HCT116 (cell line): ENCODE measurements at regions of chr12 and their contacts with region 1.

Region 1: DNA sequence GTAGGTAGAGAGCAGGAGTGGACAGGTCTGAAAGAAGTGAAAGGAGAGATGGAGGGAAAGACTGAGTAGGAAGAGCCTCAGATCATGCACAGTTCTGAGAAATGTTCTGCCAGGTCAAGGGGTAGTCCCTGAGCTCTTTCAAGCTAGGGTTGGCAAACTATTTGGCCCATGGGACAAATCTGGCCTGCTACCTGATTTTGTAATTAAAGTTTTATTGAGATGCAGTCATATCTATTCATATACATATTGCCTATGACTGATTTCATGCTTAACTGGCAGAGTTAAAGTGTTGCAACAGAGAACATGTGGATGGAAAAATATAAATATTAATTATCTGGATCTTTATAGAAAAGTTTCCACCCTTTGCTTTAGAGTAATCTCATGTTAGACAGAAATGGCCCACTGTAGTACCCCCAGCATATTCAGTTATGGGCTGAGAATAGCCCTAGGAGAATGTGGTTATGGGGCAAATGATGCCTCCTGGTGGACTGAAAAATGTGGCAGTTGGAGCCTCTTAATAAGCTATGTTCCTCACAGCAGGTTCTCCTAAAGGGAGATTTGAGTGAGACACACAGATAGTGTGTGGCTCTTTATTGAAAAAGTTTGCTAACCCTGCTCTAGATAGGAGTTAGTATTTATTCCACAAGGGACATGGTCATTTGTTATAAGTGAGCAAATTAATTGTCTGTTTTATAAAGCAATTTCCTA is 476.9 kb downstream of the LRIG3 start:
- DNase-seq: peak; percentile 40
- ATAC-seq: peak; percentile 84
- H3K4me3 ChIP-seq: no peak overlapping the region
- H3K27ac ChIP-seq: no peak overlapping the region
- H3K4me1 ChIP-seq: no peaks in the 10 kb centered on the region
- H3K27me3 ChIP-seq: no peaks in the 10 kb centered on the region
- CTCF ChIP-seq: peak; percentile 61 to 72 (median 72); a peak in 5 of 6 replicates
- POLR2A ChIP-seq: no peak
- RAD21 ChIP-seq: peak; percentile 78

Region 2: GRCh38 chr12:58346032-58346632 is 97.3 kb before region 1 on chr12:
- CTCF ChIA-PET with region 1: interaction called, 23 read pairs
- POLR2A ChIA-PET with region 1: interaction called, 4 read pairs
- RAD21 ChIA-PET with region 1: no interaction called
- intact Hi-C with region 1: loop called (anchors 1 kb)
- DNase-seq: peak; percentile 12
- ATAC-seq: peak; percentile 77
- H3K4me3 ChIP-seq: no peak overlapping the region
- H3K27ac ChIP-seq: no peak overlapping the region
- H3K4me1 ChIP-seq: no peaks in the 10 kb centered on the region
- H3K27me3 ChIP-seq: no peaks in the 10 kb centered on the region
- CTCF ChIP-seq: peak; percentile 70 to 79 (median 78)
- POLR2A ChIP-seq: no peak
- RAD21 ChIP-seq: peak; percentile 77

Region 3: DNA sequence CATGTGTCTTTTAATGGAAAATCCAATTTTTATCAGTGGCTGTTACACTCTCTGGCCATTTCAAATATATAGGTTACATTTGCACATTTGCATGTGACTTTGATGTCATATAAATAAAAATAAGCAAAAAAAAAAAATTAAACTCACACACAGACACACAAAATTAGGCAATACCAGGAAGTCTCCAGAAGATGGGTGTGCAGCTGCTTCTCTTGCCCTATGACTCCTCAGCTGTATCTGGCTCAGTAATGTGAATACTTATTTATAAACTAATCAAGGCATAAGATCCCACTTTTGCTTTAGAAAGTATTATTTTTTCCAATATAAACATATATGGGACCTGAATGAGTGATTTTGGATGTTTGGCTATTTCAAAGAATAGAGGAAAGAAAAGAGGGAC is 15.8 kb after region 1 on chr12:
- CTCF ChIA-PET with region 1: interaction called, 10 read pairs
- POLR2A ChIA-PET with region 1: no interaction called
- RAD21 ChIA-PET with region 1: no interaction called
- intact Hi-C with region 1: no loop called
- DNase-seq: no peak
- ATAC-seq: no peak
- H3K4me3 ChIP-seq: no peak overlapping the region
- H3K27ac ChIP-seq: no peak overlapping the region
- H3K4me1 ChIP-seq: no peaks in the 10 kb centered on the region
- H3K27me3 ChIP-seq: no peaks in the 10 kb centered on the region
- CTCF ChIP-seq: no peak
- POLR2A ChIP-seq: no peak
- RAD21 ChIP-seq: no peak